ENCODE measurements at regions of chr15 and their contacts with region 1.

Region 1: GRCh38 chr15:38683382-38684242 is 119.0 kb upstream of the RASGRP1 start:
- DNase-seq: peak; percentile 66
- H3K4me3 ChIP-seq: no peak overlapping the region
- H3K27ac ChIP-seq: no peak overlapping the region
- H3K4me1 ChIP-seq: no peaks in the 10 kb centered on the region
- H3K27me3 ChIP-seq: no peaks in the 10 kb centered on the region
- CTCF ChIP-seq: peak; percentile 45 to 70 (median 68)
- POLR2A ChIP-seq: no peak

Region 2: DNA sequence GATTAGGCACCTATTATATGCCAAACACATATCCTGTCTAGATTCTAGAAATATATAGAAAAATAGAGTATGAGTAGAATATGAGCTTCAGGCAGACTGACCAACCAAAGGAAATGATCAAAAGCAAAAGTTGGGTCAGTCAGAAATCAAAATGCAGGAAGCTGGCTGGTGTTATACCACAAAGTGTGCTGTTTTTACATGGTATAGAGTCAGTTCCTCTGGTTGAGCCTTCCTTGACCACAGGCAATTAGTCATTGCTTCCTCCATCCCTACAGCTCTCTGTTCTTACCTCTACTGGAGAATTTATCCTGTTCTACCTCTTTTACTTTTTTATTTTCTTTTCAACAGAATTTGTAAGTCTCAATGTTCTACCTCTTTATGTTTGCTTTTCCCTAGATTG is 599.3 kb before region 1 on chr15:
- intact Hi-C with region 1: no loop called
- DNase-seq: no peak
- H3K4me3 ChIP-seq: no peak overlapping the region
- H3K27ac ChIP-seq: no peak overlapping the region
- H3K4me1 ChIP-seq: peaks cover 21% of the 10 kb centered on the region
- H3K27me3 ChIP-seq: no peaks in the 10 kb centered on the region
- CTCF ChIP-seq: no peak
- POLR2A ChIP-seq: no peak

Region 3: DNA sequence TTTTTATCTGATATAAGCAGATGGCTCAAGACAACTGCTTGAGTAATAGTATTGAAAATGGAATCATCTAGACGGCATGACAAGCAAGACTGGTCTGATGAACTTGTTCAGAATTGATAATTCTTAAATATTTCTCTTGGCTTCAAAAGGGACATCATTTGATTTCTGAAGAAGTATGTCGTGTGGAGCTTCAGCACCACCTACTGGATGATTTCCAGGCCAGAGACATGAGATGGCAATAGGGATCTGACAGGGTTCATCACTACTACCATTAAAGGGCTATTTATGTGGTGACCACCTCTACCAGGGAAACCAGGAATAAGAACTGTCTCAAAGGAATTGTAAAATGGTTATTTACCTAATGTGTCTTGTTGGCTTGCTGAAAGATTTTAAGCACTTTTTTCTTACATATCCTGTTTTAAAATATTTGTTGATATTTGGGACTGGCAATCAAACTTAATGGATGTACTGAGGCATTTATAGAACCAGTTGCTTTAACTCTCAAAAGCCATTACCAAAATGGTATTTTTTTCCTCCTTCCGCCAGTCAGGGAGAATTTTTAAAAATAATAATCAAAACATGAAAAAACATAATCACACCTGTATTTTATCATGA is 329.2 kb before region 1 on chr15:
- intact Hi-C with region 1: no loop called
- DNase-seq: peak; percentile 83
- H3K4me3 ChIP-seq: no peak overlapping the region
- H3K27ac ChIP-seq: no peak overlapping the region
- H3K4me1 ChIP-seq: no peaks in the 10 kb centered on the region
- H3K27me3 ChIP-seq: no peaks in the 10 kb centered on the region
- CTCF ChIP-seq: peak; percentile 47 to 58 (median 52)
- POLR2A ChIP-seq: no peak

Region 4: DNA sequence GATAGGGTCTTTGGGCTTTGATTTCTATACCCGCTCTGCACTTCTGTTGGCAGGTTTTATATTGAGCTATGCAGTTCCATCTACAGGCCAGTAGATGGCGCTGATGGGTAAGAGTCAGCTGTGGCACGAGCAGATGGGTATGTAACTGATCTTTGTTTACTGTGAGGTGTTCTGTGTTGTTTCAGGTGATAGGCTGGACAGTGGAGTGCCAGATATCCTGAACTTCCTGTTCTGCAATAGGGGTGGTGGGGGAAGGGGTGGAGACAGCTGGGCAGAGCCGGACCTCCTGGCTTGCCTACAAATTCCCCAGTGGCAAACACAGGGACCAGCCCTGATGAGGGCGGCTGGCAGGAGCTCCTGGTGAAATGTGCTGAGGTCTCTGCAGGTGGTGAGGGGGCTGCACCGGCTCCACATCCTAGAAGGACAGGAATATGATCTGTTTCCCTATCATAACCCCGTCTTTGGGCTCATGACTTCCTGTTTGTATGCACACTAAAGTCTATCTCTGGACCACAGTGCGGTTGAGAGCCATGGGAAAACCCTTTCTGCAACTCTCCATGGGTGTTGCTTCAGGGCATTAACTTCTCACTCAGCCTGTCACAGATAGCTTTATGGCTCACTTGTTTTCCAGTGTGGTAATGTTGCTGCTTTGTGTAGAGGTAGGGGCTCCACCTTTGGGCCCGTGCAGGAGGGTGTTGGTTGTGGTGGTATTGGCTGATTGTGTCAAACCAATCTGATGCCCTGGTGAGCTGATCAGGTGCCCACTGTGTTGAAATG is 243.1 kb before region 1 on chr15:
- intact Hi-C with region 1: loop called (anchors 10 kb)
- DNase-seq: peak; percentile 40
- H3K4me3 ChIP-seq: no peak overlapping the region
- H3K27ac ChIP-seq: no peak overlapping the region
- H3K4me1 ChIP-seq: no peaks in the 10 kb centered on the region
- H3K27me3 ChIP-seq: no peaks in the 10 kb centered on the region
- CTCF ChIP-seq: peak; percentile 75 to 94 (median 92)
- POLR2A ChIP-seq: no peak

Region 5: DNA sequence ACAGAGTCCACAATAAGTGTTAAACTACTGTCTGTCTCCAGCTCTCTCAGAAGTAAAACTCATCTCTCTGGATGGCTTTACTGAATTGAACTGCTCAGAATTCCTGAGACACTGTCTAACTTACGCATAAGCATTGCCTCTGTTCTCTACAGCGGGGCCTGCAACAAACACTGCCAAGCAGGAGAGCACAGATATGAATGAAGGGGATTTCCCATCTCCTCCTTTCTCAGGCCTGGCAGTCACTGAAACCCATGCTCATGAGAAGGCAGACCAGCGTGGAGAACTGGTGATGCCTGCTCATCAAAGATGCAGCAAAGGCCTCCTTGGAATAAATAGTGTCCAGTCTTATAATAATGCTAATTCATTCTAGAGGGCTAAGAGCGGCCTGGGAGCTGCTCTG is 129.3 kb before region 1 on chr15:
- intact Hi-C with region 1: loop called (anchors 10 kb)
- DNase-seq: peak; percentile 20
- H3K4me3 ChIP-seq: no peak overlapping the region
- H3K27ac ChIP-seq: no peak overlapping the region
- H3K4me1 ChIP-seq: no peaks in the 10 kb centered on the region
- H3K27me3 ChIP-seq: no peaks in the 10 kb centered on the region
- CTCF ChIP-seq: no peak
- POLR2A ChIP-seq: no peak

Region 6: GRCh38 chr15:39000008-39000734 is 316.6 kb after region 1 on chr15:
- intact Hi-C with region 1: no loop called
- DNase-seq: no peak
- H3K4me3 ChIP-seq: no peak overlapping the region
- H3K27ac ChIP-seq: no peak overlapping the region
- H3K4me1 ChIP-seq: no peaks in the 10 kb centered on the region
- H3K27me3 ChIP-seq: no peaks in the 10 kb centered on the region
- CTCF ChIP-seq: no peak
- POLR2A ChIP-seq: no peak